Left cardiac atrium (tissue), 4 donors: ENCODE measurements at regions of chr7 and their contacts with region 1.

Region 1: DNA sequence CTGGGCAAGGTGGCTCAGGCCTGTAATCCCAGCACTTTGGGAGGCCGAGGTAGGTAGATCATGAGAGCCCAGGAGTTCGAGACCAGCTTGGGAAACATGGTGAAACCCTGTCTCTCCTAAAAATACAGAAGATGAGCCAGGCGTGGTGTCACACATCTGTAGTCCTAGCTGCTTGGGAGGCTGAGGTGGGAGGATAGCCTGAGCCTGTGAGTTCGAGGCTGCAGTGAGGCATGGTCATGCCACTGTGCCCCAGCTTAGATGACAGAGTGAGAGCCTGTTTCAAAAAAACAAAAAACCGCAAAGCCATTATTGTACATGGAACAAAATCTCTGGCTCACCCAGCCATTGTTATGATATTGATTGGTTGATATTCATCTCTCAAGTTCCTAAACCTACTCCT is 53.7 kb downstream of the KMT2E start:
- DNase-seq: no peak
- ATAC-seq: no peak

Region 2: GRCh38 chr7:105046414-105046813 is 21.3 kb before region 1 on chr7:
- intact Hi-C with region 1: loop called in 1 of 2 experiments (anchors 2 kb)
- DNase-seq: no peak
- ATAC-seq: peak in 1 of 2 donors; percentile 22

Region 3: GRCh38 chr7:105106473-105106872 is 38.8 kb after region 1 on chr7:
- intact Hi-C with region 1: loop called in 1 of 2 experiments (anchors 5 kb)
- DNase-seq: no peak
- ATAC-seq: no peak